AG04450 (cell line): ENCODE measurements at regions of chr3 and their contacts with region 1.

Region 1: DNA sequence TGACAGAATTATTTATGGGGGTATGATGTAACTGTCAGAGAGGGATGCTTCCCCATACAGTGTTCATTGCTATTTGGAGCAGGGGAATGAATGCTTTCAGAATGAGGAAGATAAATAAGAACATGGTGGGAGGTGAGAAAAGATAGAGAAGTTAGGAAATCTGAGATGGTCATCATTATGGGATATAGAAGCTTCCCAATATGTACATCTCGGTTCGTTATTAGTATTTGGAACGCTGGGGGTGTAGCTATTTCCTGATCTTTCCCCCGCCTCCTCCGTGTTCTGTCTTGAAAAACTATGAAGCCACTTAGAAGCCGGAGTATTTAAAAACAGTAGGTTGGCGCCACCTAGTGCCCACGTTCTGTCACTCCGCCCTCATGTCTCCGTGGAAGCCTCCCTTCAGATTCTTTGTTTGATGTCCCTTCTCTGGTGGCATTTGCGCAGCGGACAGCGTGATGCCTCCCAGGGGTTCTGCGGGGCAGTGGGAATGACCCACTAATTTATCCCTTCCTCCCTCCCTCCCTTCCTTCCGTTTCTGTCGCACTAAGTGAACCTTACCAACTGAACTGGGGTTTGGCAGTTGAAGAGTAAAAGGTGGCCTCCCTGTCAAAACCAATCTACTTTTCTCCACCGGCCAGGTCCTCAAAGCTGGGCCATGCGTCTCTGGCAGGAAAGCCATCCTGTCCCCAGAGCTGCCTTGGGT is 184.5 kb downstream of the FEZF2 start:
- DNase-seq: peak; percentile 54
- H3K4me3 ChIP-seq: no peak overlapping the region
- H3K27ac ChIP-seq: no peak overlapping the region
- H3K27me3 ChIP-seq: no peaks in the 10 kb centered on the region
- CTCF ChIP-seq: peak; percentile 81

Region 2: DNA sequence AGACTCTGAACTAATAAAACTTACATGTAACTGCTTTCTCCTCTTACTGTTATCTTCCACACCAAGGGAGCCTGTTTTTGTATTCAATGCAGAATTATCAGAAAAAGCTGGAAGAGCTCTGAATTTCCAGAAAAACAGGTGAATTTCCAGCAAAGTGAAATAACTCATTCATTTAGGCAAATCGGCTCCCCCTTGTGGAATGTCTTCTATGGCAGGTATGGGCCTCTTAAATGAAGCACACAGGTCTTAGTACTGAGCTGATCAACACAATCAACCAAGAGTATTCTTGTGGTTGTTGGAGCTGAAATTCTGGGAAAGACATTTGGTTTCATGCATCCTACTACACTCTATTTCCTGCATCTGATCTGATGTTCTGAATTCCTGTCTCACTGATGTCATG is 658.5 kb before region 1 on chr3:
- CTCF ChIA-PET with region 1: interaction called, 10 read pairs
- POLR2A ChIA-PET with region 1: no interaction called
- DNase-seq: no peak
- H3K4me3 ChIP-seq: no peak overlapping the region
- H3K27ac ChIP-seq: no peak overlapping the region
- H3K27me3 ChIP-seq: peaks cover 9% of the 10 kb centered on the region
- CTCF ChIP-seq: peak; percentile 57

Region 3: GRCh38 chr3:61783993-61784718 is 404.7 kb before region 1 on chr3:
- CTCF ChIA-PET with region 1: interaction called, 10 read pairs
- POLR2A ChIA-PET with region 1: no interaction called
- DNase-seq: peak; percentile 64
- H3K4me3 ChIP-seq: no peak overlapping the region
- H3K27ac ChIP-seq: peak overlapping the region; percentile 49
- H3K27me3 ChIP-seq: no peaks in the 10 kb centered on the region
- CTCF ChIP-seq: no peak

Region 4: DNA sequence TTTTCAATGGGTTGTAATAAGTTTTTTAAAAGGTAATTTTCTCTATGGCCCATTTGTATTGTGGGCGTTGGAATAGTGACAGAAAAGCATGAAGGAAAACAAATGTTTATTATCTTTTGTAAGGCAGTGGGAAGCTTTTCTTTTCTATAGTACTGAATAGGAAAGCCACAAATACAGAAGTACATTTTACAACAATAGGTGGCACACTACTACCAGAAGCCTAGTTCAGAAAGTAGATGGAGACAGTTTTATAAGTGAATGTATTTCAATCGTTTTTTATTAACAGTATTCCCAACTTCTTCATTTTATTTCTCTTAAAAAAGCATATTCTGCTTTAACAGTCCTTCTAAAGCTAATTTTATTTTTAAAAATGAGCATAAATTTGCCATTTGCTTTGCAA is 330.8 kb before region 1 on chr3:
- CTCF ChIA-PET with region 1: interaction called, 84 read pairs
- POLR2A ChIA-PET with region 1: no interaction called
- DNase-seq: no peak
- H3K4me3 ChIP-seq: no peak overlapping the region
- H3K27ac ChIP-seq: no peak overlapping the region
- H3K27me3 ChIP-seq: no peaks in the 10 kb centered on the region
- CTCF ChIP-seq: peak; percentile 57